IMR-90 (cell line): ENCODE measurements at regions of chr5 and their contacts with region 1.

Region 1: GRCh38 chr5:38719916-38720315 is 125.9 kb upstream of the OSMR start:
- DNase-seq: peak; percentile 89
- ATAC-seq: peak; percentile 94
- H3K4me3 ChIP-seq: no peak overlapping the region
- H3K27ac ChIP-seq: no peak overlapping the region
- H3K4me1 ChIP-seq: peaks cover 17% of the 10 kb centered on the region
- H3K27me3 ChIP-seq: no peaks in the 10 kb centered on the region
- CTCF ChIP-seq: no peak
- POLR2A ChIP-seq: no peak
- RAD21 ChIP-seq: no peak

Region 2: DNA sequence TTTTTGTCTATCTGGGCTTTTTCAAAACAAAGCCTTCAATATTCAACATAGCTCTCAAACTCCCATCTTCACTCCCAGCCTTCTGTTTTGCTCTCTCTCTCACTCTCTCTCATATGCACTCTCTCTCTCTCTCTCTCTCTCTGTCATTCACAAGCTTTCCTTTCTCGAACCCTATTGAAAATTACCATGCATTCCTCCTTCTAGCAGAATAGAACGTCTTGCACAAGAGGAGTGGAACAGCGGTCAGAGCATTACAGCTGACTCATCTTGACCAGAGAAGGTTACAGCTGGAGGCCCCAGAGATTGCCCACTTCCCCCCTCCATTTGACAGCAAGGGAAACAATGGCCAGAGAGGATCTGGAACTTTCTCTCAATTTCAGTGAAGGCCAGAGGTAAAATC is 112.5 kb before region 1 on chr5:
- CTCF ChIA-PET with region 1: no interaction called
- POLR2A ChIA-PET with region 1: no interaction called
- dilution Hi-C with region 1: no loop called
- in situ Hi-C with region 1: no loop called
- intact Hi-C with region 1: loop called (anchors 5 kb)
- DNase-seq: peak; percentile 97
- ATAC-seq: peak; percentile 90
- H3K4me3 ChIP-seq: no peak overlapping the region
- H3K27ac ChIP-seq: peak overlapping the region; percentile 80; the same call in 1 of the 2 replicates
- H3K4me1 ChIP-seq: peaks cover 12% of the 10 kb centered on the region
- H3K27me3 ChIP-seq: no peaks in the 10 kb centered on the region; the same call in 1 of the 2 replicates
- CTCF ChIP-seq: no peak
- POLR2A ChIP-seq: no peak
- RAD21 ChIP-seq: no peak

Region 3: DNA sequence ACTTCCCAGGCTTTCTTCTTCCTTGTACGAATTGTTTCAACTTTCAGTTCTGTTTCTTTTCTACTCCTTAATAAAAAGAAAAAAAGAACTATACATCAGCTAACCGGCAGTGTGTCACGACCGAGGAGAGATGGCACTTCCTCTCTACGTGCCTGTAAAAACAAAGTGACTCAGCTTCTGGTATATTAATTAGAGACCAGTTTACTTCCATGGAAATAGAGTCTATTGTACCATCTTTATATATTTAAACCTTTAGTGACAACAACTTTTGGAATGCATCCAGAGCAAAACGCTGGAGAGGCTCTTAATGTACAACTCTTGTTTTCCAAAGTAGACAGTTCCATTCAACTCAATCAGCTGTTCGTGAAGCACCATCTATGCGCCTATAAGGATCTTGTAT is 69.0 kb before region 1 on chr5:
- CTCF ChIA-PET with region 1: no interaction called
- POLR2A ChIA-PET with region 1: interaction called, 10 read pairs
- dilution Hi-C with region 1: no loop called
- in situ Hi-C with region 1: no loop called
- intact Hi-C with region 1: no loop called
- DNase-seq: peak; percentile 20
- ATAC-seq: peak; percentile 72
- H3K4me3 ChIP-seq: no peak overlapping the region
- H3K27ac ChIP-seq: no peak overlapping the region
- H3K4me1 ChIP-seq: peaks cover 2% of the 10 kb centered on the region; the same call in 1 of the 2 replicates
- H3K27me3 ChIP-seq: peaks cover 1% of the 10 kb centered on the region
- CTCF ChIP-seq: no peak
- POLR2A ChIP-seq: no peak
- RAD21 ChIP-seq: no peak